CD4-positive, alpha-beta T cell (primary cell): ENCODE measurements at regions of chr1 and their contacts with region 1.

Region 1: GRCh38 chr1:155934097-155934935 is at the start of gene KHDC4:
- DNase-seq: peak; percentile 88 to 99 (median 93)
- ATAC-seq: peak; percentile 93
- H3K4me3 ChIP-seq: peak within 1 kb of the TSS; percentile 82
- H3K4me3 Mint-ChIP-seq: no peak within 1 kb of the TSS
- H3K27ac ChIP-seq: peak within 1 kb of the TSS; percentile 86 to 95
- H3K27ac Mint-ChIP-seq: no peak within 1 kb of the TSS
- H3K4me1 ChIP-seq: peaks cover 42% of the 10 kb centered on the region
- H3K4me1 Mint-ChIP-seq: peaks cover 38% of the 10 kb centered on the region
- H3K27me3 ChIP-seq: no peaks in the 10 kb centered on the region
- H3K27me3 Mint-ChIP-seq: no peaks in the 10 kb centered on the region
- CTCF ChIP-seq: no peak
- total RNA-seq, gene KHDC4: 56.6 to 60.8 TPM

Region 2: DNA sequence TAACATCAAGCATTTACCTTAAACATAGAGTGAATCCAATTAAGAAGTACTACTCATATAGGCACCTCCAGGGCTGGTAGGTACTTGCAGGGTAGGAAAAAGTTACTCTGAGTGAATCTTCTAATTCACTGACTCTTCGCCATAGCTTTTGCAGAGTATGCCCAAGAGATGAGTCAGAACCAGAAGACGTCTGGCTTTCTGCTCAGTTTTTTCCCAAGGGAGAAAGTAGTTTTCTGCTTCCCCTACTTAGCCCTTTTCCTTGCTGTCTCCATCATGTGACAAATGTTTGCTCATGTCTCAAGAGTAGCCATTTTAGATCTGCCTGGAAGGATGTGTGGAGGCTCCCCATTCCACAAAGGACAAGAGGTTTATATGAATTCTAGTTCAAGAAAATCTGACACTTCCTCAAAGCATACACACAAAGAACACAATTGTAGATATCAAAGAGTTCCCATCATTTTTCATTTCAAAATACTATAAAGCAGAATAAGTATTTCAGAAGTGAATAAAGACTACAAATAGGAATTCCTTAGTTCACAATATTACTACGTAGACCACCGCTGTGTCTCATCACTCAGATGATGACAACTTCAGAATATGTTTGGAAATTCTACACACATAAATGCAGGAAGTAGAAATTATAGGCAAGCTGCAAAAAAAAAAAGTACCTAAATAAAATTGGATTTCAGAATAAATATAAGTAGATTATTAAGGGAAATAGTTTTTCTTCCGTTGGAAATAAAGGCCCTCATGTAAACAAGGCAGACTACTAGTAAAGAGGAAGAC is 470.3 kb before region 1 on chr1:
- CTCF ChIA-PET with region 1: no interaction called
- POLR2A ChIA-PET with region 1: no interaction called
- intact Hi-C with region 1: no loop called
- DNase-seq: no peak
- ATAC-seq: no peak
- H3K4me3 ChIP-seq: no peak overlapping the region
- H3K4me3 Mint-ChIP-seq: no peak overlapping the region
- H3K27ac ChIP-seq: no peak overlapping the region
- H3K27ac Mint-ChIP-seq: peak overlapping the region; percentile 74
- H3K4me1 ChIP-seq: peaks cover 3% of the 10 kb centered on the region
- H3K4me1 Mint-ChIP-seq: peaks cover 59% of the 10 kb centered on the region
- H3K27me3 ChIP-seq: no peaks in the 10 kb centered on the region
- H3K27me3 Mint-ChIP-seq: no peaks in the 10 kb centered on the region
- CTCF ChIP-seq: no peak

Region 3: DNA sequence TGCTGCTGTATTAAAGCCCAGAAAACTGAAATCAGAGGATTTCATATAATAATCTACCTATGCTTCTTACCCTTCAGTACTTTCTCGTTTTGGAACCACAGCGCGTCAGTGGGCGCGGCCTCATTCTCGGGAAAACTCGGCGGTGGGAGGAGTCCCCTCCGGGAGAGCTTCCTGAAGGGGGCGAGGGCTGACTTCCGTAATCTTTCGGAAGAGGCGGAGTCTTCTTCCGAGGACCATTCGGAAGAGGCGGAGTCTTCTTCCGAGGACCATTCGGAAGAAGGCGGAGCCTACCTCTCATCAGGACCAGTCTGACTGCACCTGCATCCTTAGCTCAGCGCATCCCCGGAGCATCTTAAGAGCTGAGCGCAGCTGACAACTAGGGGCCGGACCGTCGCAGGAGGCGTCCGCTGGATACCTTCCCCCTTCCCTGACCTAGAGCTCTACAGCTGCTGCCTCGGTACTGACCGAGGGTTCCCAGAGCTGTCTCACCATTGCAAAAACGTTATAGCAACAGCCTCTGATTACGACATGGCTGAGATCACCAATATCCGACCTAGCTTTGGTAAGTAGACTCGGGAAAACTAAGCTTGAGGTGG is 75.0 kb before region 1 on chr1 and contains the start of gene SYT11:
- CTCF ChIA-PET with region 1: no interaction called
- POLR2A ChIA-PET with region 1: interaction called, 6 read pairs
- intact Hi-C with region 1: loop called in 1 of 2 experiments (anchors 5 kb)
- DNase-seq: peak; percentile 83 to 97 (median 92)
- ATAC-seq: peak; percentile 89
- H3K4me3 ChIP-seq: peak within 1 kb of the TSS; percentile 62
- H3K4me3 Mint-ChIP-seq: peak within 1 kb of the TSS; percentile 93
- H3K27ac ChIP-seq: peak within 1 kb of the TSS; percentile 42 to 81
- H3K27ac Mint-ChIP-seq: peak within 1 kb of the TSS; percentile 81
- H3K4me1 ChIP-seq: peaks cover 38% of the 10 kb centered on the region
- H3K4me1 Mint-ChIP-seq: peaks cover 33% of the 10 kb centered on the region
- H3K27me3 ChIP-seq: peaks cover 0 to 8% of the 10 kb centered on the region in 2 experiments
- H3K27me3 Mint-ChIP-seq: peaks cover 25% of the 10 kb centered on the region
- CTCF ChIP-seq: no peak
- total RNA-seq, gene SYT11: 6.1 to 6.3 TPM

Region 4: GRCh38 chr1:155946633-155947219 is 12.4 kb after region 1 on chr1:
- CTCF ChIA-PET with region 1: interaction called, 5 read pairs
- POLR2A ChIA-PET with region 1: interaction called, 20 read pairs
- intact Hi-C with region 1: loop called in 1 of 2 experiments (anchors 1 kb)
- DNase-seq: no peak
- ATAC-seq: no peak
- H3K4me3 ChIP-seq: no peak overlapping the region
- H3K4me3 Mint-ChIP-seq: no peak overlapping the region
- H3K27ac ChIP-seq: peak overlapping the region; percentile 56 to 67
- H3K27ac Mint-ChIP-seq: peak overlapping the region; percentile 91
- H3K4me1 ChIP-seq: peaks cover 47% of the 10 kb centered on the region
- H3K4me1 Mint-ChIP-seq: peaks cover 32% of the 10 kb centered on the region
- H3K27me3 ChIP-seq: no peaks in the 10 kb centered on the region
- H3K27me3 Mint-ChIP-seq: no peaks in the 10 kb centered on the region
- CTCF ChIP-seq: no peak

Region 5: GRCh38 chr1:155989242-155990004 is 55.1 kb after region 1 on chr1:
- CTCF ChIA-PET with region 1: interaction called, 15 read pairs
- POLR2A ChIA-PET with region 1: interaction called, 13 read pairs
- intact Hi-C with region 1: loop called (anchors 1 kb)
- DNase-seq: peak; percentile 67 to 89 (median 76)
- ATAC-seq: peak; percentile 100
- H3K4me3 ChIP-seq: no peak overlapping the region
- H3K4me3 Mint-ChIP-seq: no peak overlapping the region
- H3K27ac ChIP-seq: no peak overlapping the region
- H3K27ac Mint-ChIP-seq: no peak overlapping the region
- H3K4me1 ChIP-seq: peaks cover 15% of the 10 kb centered on the region
- H3K4me1 Mint-ChIP-seq: peaks cover 11% of the 10 kb centered on the region
- H3K27me3 ChIP-seq: no peaks in the 10 kb centered on the region
- H3K27me3 Mint-ChIP-seq: no peaks in the 10 kb centered on the region
- CTCF ChIP-seq: peak; percentile 91

Region 6: DNA sequence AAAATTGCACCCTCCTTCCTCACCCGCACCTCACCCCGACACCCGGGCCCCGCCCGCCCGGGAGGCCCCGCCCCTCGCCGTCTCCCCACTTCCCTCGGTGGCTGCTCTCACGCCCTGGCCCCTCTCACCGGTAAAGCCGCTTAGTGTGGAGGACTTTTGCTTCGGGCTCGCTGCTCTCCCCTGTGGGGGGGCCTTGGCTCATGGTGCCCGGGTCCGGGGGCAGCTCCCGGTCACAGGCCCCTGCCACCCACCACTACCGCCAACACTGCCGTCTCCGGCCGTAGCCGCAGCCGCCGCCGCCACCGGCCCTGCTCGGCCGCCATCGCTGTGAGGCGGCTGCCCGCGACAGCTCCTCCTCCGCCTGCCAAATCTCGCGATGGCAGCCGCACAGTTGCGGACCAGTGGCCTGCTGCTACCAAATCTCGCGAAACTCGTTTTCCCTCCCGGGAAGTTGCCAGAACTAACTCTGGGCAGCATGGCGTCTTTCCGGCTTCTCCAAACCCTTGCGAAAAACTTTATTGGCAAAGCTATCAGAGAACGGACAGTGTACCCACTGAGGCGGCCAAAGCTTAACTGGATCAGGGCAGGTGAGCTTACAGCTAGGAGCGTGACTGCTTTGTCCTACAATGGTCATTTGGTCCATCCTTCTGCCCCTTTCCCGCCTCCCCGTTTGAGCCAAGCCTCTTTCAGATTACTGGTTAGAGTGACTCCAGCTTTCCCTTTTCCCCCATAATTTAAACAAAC is 348.3 kb after region 1 on chr1 and contains the start of gene SMG5:
- CTCF ChIA-PET with region 1: no interaction called
- POLR2A ChIA-PET with region 1: interaction called, 3 read pairs
- intact Hi-C with region 1: loop called in 1 of 2 experiments (anchors 2 kb)
- DNase-seq: peak; percentile 90 to 99 (median 94)
- ATAC-seq: peak; percentile 94
- H3K4me3 ChIP-seq: peak within 1 kb of the TSS; percentile 79
- H3K4me3 Mint-ChIP-seq: peak within 1 kb of the TSS; percentile 97
- H3K27ac ChIP-seq: peak within 1 kb of the TSS; percentile 82
- H3K27ac Mint-ChIP-seq: peak within 1 kb of the TSS; percentile 86
- H3K4me1 ChIP-seq: peaks cover 36% of the 10 kb centered on the region
- H3K4me1 Mint-ChIP-seq: peaks cover 47% of the 10 kb centered on the region
- H3K27me3 ChIP-seq: no peaks in the 10 kb centered on the region
- H3K27me3 Mint-ChIP-seq: no peaks in the 10 kb centered on the region
- CTCF ChIP-seq: no peak
- total RNA-seq, gene SMG5: 51.6 to 56.1 TPM